A673 (cell line): ENCODE measurements at regions of chr9 and their contacts with region 1.

Region 1: DNA sequence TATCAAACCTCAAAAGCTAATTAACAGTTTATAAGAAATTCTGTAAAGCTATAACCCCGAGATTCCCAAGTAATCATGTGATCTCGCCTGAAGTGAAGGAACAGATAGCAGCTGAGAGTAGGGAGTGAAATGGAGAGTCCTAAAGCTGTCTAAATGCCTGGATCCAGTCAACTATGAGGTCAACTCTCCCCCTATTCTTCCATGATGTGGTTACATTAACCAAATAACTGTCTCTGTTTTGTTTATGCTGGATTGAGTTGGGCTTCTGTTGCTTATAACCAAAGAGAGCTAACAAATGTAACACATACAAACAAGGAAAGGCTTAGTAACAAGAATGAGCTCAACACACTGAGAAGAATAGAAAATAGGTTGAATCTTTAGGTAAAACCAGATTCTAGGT is 41.6 kb downstream of the GKAP1 start:
- DNase-seq: no peak
- H3K4me3 ChIP-seq: no peak overlapping the region
- H3K27ac ChIP-seq: no peak overlapping the region
- H3K4me1 ChIP-seq: no peaks in the 10 kb centered on the region
- H3K27me3 ChIP-seq: no peaks in the 10 kb centered on the region
- CTCF ChIP-seq: no peak

Region 2: GRCh38 chr9:81787747-81788632 is 1987.9 kb before region 1 on chr9:
- CTCF ChIA-PET with region 1: interaction called, 14 read pairs
- POLR2A ChIA-PET with region 1: no interaction called
- intact Hi-C with region 1: no loop called
- DNase-seq: no peak
- H3K4me3 ChIP-seq: no peak overlapping the region
- H3K27ac ChIP-seq: no peak overlapping the region
- H3K4me1 ChIP-seq: no peaks in the 10 kb centered on the region
- H3K27me3 ChIP-seq: no peaks in the 10 kb centered on the region
- CTCF ChIP-seq: no peak

Region 3: GRCh38 chr9:83649080-83649479 is 126.9 kb before region 1 on chr9:
- CTCF ChIA-PET with region 1: no interaction called
- POLR2A ChIA-PET with region 1: no interaction called
- intact Hi-C with region 1: no loop called
- DNase-seq: peak; percentile 65
- H3K4me3 ChIP-seq: no peak overlapping the region
- H3K27ac ChIP-seq: no peak overlapping the region
- H3K4me1 ChIP-seq: peaks cover 48% of the 10 kb centered on the region
- H3K27me3 ChIP-seq: no peaks in the 10 kb centered on the region
- CTCF ChIP-seq: peak; percentile 73

Region 4: GRCh38 chr9:83675466-83675865 is 100.5 kb before region 1 on chr9:
- CTCF ChIA-PET with region 1: no interaction called
- POLR2A ChIA-PET with region 1: no interaction called
- intact Hi-C with region 1: no loop called
- DNase-seq: no peak
- H3K4me3 ChIP-seq: no peak overlapping the region
- H3K27ac ChIP-seq: no peak overlapping the region
- H3K4me1 ChIP-seq: no peaks in the 10 kb centered on the region
- H3K27me3 ChIP-seq: no peaks in the 10 kb centered on the region
- CTCF ChIP-seq: no peak

Region 5: GRCh38 chr9:84002344-84002743 is 226.4 kb after region 1 on chr9:
- CTCF ChIA-PET with region 1: no interaction called
- POLR2A ChIA-PET with region 1: no interaction called
- intact Hi-C with region 1: no loop called
- DNase-seq: no peak
- H3K4me3 ChIP-seq: no peak overlapping the region
- H3K27ac ChIP-seq: no peak overlapping the region
- H3K4me1 ChIP-seq: no peaks in the 10 kb centered on the region
- H3K27me3 ChIP-seq: no peaks in the 10 kb centered on the region
- CTCF ChIP-seq: no peak